ENCODE measurements at regions of chr1 and their contacts with region 1.

Region 1: DNA sequence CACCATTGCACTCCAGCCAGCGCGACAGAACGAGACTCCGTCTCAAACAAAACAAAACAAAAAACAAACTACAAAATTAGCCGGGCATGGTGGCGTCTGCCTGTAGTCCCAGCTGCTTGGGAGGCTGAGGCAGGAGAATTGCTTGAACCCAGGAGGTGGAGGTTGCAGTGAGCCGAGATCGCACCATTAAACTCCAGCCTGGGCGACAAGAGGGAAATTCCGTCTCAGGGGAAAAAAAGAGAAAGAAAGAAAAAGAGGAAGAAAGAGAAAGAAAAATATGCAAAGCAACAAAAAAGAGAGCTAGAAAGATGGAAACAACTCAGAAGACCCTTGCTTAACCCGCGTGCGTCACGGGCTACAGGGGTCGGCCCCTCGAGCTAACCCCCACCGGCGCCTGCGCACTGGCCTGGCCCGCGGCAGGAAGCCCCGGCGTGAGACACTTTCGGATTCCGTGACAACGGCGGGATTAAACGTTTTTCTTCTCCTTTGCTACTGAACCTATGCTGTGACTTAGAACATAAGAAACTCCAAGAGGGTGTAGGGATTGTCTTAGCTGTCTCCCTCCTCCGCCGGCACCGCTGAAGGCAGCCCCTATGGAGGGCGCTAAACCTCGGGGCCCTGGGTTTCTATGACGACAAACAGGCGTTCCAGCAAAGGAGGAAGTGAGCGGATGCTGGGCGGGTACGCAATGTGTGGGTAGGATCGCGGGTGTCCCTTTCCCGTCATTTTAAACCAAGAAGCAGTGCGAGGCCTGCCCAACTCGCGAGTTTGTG is at the start of gene AXDND1:
- DNase-seq: peak; percentile 92
- ATAC-seq: peak; percentile 95
- H3K4me3 Mint-ChIP-seq: peak within 1 kb of the TSS; percentile 79
- H3K27ac Mint-ChIP-seq: peak within 1 kb of the TSS; percentile 97
- H3K4me1 Mint-ChIP-seq: peaks cover 8% of the 10 kb centered on the region
- H3K27me3 Mint-ChIP-seq: no peaks in the 10 kb centered on the region
- total RNA-seq, gene AXDND1: not detected

Region 2: GRCh38 chr1:179081687-179082332 is 283.7 kb before region 1 on chr1 and contains the start of gene TOR3A:
- CTCF ChIA-PET with region 1: interaction called, 52 read pairs
- DNase-seq: peak; percentile 93
- ATAC-seq: peak; percentile 88
- H3K4me3 Mint-ChIP-seq: peak within 1 kb of the TSS; percentile 99
- H3K27ac Mint-ChIP-seq: peak within 1 kb of the TSS; percentile 96
- H3K4me1 Mint-ChIP-seq: peaks cover 34% of the 10 kb centered on the region
- H3K27me3 Mint-ChIP-seq: no peaks in the 10 kb centered on the region
- total RNA-seq, gene TOR3A: 52.4 to 56.1 TPM

Region 3: GRCh38 chr1:179121159-179121938 is 244.2 kb before region 1 on chr1:
- CTCF ChIA-PET with region 1: interaction called, 31 read pairs
- DNase-seq: peak; percentile 54
- ATAC-seq: no peak
- H3K4me3 Mint-ChIP-seq: no peak overlapping the region
- H3K27ac Mint-ChIP-seq: no peak overlapping the region
- H3K4me1 Mint-ChIP-seq: no peaks in the 10 kb centered on the region
- H3K27me3 Mint-ChIP-seq: no peaks in the 10 kb centered on the region

Region 4: DNA sequence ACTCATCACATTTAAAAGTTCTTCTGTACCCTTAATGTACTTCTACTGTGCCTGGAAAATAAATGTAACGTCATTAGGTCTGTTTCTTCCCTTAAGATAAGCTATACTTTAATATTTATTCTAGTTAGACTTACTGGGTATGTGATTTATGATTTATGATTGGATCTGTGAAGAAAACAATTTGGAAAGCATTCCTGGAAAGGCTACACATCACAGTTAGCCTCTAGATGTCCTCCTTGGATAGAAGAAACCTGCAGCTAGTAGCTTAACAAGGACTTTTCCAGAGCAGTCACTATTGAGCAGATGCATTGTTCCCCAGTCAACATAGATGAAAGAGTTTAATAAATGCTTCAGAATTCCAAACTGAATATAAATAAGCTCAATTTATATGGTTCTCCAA is 113.8 kb before region 1 on chr1:
- CTCF ChIA-PET with region 1: interaction called, 13 read pairs
- DNase-seq: no peak
- ATAC-seq: no peak
- H3K4me3 Mint-ChIP-seq: no peak overlapping the region
- H3K27ac Mint-ChIP-seq: no peak overlapping the region
- H3K4me1 Mint-ChIP-seq: no peaks in the 10 kb centered on the region
- H3K27me3 Mint-ChIP-seq: no peaks in the 10 kb centered on the region

Region 5: DNA sequence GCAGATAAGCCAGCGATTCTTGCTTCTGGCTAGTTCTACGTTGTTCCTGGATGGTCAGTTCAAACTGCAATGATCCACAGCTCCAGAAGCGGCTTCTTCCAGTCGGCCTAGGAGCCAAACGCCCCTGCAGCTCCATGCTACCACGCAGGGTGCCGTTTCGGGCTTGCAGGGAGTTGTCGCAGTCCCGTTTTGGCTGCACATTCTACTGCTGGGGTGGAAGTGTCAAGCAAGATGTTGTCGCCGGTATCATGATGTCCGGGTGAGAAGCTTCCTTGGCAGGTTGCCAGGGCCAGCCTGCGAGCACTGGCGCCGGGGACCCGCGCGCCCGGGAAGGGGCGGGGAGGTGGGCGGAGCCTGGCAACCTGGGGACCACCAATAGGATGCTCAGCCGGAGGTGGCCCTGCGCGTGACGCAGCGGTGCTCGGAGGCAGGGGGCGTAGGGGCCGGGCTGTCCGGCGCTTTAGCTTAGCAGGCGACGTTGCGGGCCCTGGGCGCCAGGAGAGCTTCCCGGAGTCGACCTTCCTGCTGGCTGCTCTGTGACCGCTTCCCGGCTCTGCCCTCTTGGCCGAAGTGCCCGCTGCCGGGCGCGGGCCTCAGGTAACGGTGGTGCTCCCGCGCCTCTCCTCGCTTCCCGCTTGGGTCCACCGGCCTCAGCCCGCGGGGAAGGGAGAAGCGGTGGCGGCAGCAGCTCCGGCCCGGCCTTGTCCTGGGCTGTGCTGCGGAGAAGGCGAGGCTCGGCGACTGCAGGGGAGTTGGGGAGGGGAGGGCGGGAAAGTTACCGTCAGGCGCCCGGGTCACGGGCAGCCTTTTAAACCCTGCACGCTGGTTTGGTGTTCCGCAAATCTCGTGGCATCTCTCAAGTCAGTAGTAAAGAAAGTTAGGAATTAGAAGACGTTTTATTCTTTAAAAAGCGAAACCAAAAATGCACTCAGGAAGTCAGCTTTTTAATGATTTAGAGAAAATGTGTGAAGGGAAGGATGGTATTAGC is 71.9 kb before region 1 on chr1 and contains the start of gene SOAT1:
- CTCF ChIA-PET with region 1: interaction called, 23 read pairs
- DNase-seq: peak; percentile 95
- ATAC-seq: peak; percentile 98
- H3K4me3 Mint-ChIP-seq: peak within 1 kb of the TSS; percentile 88
- H3K27ac Mint-ChIP-seq: peak within 1 kb of the TSS; percentile 95
- H3K4me1 Mint-ChIP-seq: peaks cover 42% of the 10 kb centered on the region
- H3K27me3 Mint-ChIP-seq: no peaks in the 10 kb centered on the region
- total RNA-seq, gene SOAT1: 47.8 to 84.5 TPM

Measured in activated CD8-positive, alpha-beta memory T cell treated with anti-CD3 and anti-CD28 coated beads, Interleukin-2, amount 10 ng/mL, durations not matched to agents 7 days and 5 days (primary cell).